ENCODE measurements at regions of chr9 and their contacts with region 1.

Region 1: GRCh38 chr9:34637356-34638137 is at the start of gene SIGMAR1:
- DNase-seq: peak; percentile 72 to 89
- H3K4me3 ChIP-seq: peak within 1 kb of the TSS; percentile 82
- H3K27ac ChIP-seq: no peak within 1 kb of the TSS
- H3K4me1 ChIP-seq: peaks cover 14% of the 10 kb centered on the region
- H3K27me3 ChIP-seq: no peaks in the 10 kb centered on the region
- CTCF ChIP-seq: no peak
- total RNA-seq, gene SIGMAR1: 55.8 and 57.9 TPM in 2 replicates

Region 2: DNA sequence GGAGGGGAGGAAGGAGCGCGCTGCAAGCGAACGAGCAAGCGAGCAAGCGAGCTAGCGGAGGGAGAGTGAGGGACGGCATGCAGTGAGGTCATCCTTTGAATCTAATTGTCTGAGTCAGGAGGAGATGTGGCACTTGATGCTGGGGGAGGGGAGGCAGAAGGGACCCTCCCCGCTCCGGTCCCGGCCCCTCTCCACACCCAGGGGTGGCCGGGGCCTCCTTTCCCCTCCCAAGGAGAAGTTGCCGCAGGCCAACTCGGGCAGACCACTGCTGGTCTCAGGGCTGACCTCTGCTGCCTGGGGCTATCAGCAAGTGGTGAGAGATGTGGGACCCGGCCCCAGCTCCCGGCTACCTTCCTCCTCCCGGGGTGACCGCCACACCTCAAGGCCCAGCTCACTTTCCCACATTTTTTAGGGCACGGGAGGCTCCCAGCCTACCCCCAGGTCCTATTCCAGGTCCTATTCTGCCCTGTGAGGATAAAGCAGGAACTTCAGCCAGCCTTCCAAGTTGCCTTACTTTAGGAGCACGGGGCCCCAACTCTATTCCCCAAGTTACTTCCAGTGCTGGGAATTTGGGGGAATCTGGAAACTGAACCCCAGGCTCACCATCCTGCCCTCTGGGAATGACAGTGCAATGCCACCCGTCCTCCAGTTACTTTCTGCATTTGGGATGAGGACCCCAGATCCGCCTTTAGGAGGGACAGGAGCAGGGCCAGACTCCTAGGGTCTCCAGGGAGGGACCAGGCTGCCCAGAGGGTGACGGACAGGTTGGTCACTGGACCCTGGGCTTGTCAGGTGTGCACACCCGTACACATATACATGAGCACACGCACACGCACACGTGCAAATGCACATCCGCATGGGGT is 59.1 kb before region 1 on chr9:
- CTCF ChIA-PET with region 1: no interaction called
- POLR2A ChIA-PET with region 1: no interaction called
- intact Hi-C with region 1: no loop called
- DNase-seq: no peak
- H3K4me3 ChIP-seq: no peak overlapping the region
- H3K27ac ChIP-seq: no peak overlapping the region
- H3K4me1 ChIP-seq: no peaks in the 10 kb centered on the region
- H3K27me3 ChIP-seq: peaks cover 62% of the 10 kb centered on the region
- CTCF ChIP-seq: no peak

Region 3: DNA sequence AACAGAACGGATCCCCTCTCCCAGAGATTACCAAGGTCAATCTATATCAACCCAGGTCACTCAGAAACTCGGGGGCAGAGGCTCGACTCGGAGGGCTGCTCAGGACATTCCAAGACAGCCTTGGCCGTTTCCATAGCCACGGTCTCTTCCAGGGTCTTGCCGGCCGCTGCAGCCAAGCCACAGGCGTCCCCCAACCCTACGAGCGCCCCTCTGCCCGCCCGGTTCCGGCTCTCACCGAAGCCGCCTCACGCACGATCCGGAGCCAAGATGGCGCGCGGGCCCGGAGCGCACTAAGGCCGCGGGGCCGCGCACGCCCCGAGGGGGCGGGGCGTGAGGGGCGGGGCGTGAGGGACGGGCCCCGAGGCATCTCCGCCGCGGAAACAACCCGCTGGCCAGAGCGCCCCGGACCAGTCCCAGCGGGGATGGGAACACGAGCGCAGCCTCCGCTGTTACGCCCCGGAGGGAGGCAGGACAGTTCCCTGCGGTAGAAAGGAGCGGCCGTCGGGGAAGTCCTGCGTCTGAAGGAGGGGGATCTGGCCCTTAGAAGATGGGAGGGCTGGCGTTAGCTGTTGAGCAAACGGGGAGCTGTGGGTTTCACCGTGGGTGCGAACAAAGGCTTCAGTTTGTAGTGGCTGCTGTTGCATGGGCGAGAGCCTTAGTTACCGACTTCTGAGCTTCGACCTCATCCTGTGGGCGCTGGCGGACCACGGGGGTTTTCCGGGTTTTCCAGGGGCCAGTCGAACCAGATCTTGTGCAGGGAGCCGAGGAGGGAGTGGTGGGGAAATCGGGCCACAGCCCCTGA is 25.5 kb before region 1 on chr9 and contains the start of gene RPP25L:
- CTCF ChIA-PET with region 1: no interaction called
- POLR2A ChIA-PET with region 1: no interaction called
- intact Hi-C with region 1: loop called (anchors 2 kb)
- DNase-seq: peak; percentile 52 to 78
- H3K4me3 ChIP-seq: peak within 1 kb of the TSS; percentile 86
- H3K27ac ChIP-seq: peak within 1 kb of the TSS; percentile 23; the same call in 1 of the 2 replicates
- H3K4me1 ChIP-seq: 0 out of 2 replicates have a peak, but pooled peaks cover 4% of the 10 kb centered on the region
- H3K27me3 ChIP-seq: no peaks in the 10 kb centered on the region
- CTCF ChIP-seq: no peak
- total RNA-seq, gene RPP25L: 15.6 and 19.4 TPM in 2 replicates

Region 4: GRCh38 chr9:34651876-34652601 is 14.5 kb after region 1 on chr9 and contains the start of gene IL11RA:
- CTCF ChIA-PET with region 1: no interaction called
- POLR2A ChIA-PET with region 1: no interaction called
- intact Hi-C with region 1: no loop called
- DNase-seq: peak; percentile 65 to 86
- H3K4me3 ChIP-seq: peak within 1 kb of the TSS; percentile 54; the same call in 1 of the 2 replicates
- H3K27ac ChIP-seq: 0 out of 2 replicates have a peak within 1 kb of the TSS, but pooled peaks have one; percentile 19
- H3K4me1 ChIP-seq: peaks cover 19% of the 10 kb centered on the region
- H3K27me3 ChIP-seq: no peaks in the 10 kb centered on the region
- CTCF ChIP-seq: no peak
- total RNA-seq, gene IL11RA: 8.5 and 8.7 TPM in 2 replicates

Region 5: DNA sequence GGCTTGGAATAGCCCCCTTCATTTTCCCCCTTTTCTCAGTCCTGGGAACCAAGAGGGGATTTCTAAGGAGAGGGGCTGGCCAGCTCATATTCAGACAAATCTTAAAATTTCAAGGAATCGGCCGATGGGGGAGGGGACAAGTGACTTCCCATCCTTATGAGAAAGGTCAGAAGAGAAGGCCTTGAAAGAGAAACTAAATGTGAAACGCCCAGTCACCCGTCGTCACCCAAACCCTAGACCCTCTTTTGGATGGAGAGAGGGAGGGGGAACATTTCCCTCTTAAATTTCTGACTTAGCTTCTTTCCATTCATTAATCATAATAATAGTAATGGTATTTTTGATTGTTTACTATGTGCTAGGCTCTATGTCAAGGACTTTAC is 54.4 kb after region 1 on chr9:
- CTCF ChIA-PET with region 1: interaction called, 10 read pairs
- POLR2A ChIA-PET with region 1: no interaction called
- intact Hi-C with region 1: no loop called
- DNase-seq: no peak
- H3K4me3 ChIP-seq: no peak overlapping the region
- H3K27ac ChIP-seq: no peak overlapping the region
- H3K4me1 ChIP-seq: no peaks in the 10 kb centered on the region
- H3K27me3 ChIP-seq: no peaks in the 10 kb centered on the region
- CTCF ChIP-seq: no peak

Region 6: GRCh38 chr9:34701769-34702736 is 64.5 kb after region 1 on chr9:
- CTCF ChIA-PET with region 1: no interaction called
- POLR2A ChIA-PET with region 1: no interaction called
- intact Hi-C with region 1: loop called (anchors 2 kb)
- DNase-seq: peak; percentile 37 to 69
- H3K4me3 ChIP-seq: peak overlapping the region; percentile 59
- H3K27ac ChIP-seq: no peak overlapping the region
- H3K4me1 ChIP-seq: no peaks in the 10 kb centered on the region
- H3K27me3 ChIP-seq: peaks cover 11% of the 10 kb centered on the region
- CTCF ChIP-seq: peak; percentile 89

Region 7: DNA sequence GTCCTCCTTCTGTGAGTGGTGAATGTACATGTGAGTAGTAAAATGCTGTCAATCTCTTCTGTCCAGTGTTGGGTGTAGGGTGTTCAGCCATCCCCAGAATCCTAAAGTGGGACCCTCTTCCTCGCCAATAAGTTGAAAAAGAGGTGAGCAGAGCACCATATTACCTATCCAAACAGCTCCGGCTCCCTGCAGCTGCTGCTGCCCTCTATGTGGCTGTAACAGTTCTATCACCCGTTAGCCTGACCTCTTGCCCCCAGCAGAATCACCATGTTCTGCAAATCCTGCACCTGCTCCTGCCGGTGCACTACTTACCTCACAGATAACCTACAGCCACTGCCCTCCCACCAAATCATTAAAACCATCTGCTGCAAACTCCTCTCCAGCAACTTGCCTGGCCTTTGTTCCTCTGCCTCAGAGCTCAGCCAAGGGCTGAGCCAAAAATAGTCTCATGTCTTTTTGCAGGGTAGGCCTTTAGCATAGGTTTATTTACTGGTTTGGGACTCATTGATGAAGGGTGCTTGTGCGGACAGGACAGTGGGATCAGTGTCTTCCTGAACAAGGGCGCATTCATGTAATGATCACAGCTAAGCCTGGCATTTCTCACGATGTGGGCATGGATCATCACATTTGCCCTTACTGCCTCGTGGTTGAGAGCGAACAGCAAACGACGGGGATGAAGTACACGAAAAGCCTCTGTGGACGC is 122.0 kb after region 1 on chr9:
- CTCF ChIA-PET with region 1: interaction called, 16 read pairs
- POLR2A ChIA-PET with region 1: no interaction called
- intact Hi-C with region 1: no loop called
- DNase-seq: no peak
- H3K4me3 ChIP-seq: no peak overlapping the region
- H3K27ac ChIP-seq: no peak overlapping the region
- H3K4me1 ChIP-seq: no peaks in the 10 kb centered on the region
- H3K27me3 ChIP-seq: peaks cover 11% of the 10 kb centered on the region; the same call in 1 of the 2 replicates
- CTCF ChIP-seq: no peak

Measured in PC-9 (cell line).